ENCODE measurements at regions of chr12 and their contacts with region 1.

Region 1: DNA sequence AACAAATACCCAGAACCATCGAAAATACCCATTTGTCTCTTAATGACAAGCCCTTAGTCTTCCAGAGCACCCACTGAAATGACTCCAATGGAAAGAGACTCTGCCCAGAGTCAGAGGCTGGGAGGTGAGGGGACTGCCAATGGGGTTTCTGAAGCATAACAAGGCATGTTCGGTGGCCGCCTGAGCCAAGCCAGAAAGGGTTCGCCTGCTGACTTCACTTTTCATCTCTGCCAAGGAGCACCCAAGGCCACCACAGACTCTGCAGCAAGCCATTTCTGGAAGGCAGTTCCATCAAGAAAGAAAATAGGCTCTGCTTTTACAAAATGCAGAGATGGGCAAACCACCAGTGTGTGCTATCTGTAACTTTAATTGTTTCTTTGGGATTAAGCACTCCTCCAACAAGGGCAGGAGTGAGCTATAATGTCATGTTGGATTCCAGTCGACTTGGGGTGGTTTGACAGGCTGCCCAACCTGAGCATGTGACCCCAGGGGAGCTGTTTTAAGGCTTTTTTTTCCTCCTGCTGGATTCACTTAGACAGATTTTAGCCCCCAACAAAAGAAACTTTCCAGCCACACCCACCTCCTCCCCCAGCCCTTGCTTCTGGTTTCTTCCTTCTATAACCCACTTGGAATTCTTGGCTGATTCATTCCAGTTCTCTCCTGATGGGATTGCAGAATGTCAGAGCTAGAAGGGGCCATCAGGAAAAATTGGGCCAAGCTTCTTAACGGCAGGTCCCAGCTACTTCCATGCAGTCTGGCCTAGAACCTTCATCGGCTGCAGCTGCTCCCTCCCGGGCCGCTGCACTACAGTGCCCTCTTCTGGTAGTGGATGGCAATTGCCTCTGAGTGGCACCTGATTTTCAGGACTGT is 24.1 kb downstream of the CKAP4 start:
- DNase-seq: peak; percentile 68 to 84 (median 77)
- H3K4me3 ChIP-seq: no peak overlapping the region
- H3K27ac ChIP-seq: peak overlapping the region in 1 of 2 donors; percentile 37
- H3K4me1 ChIP-seq: no peaks in the 10 kb centered on the region
- H3K27me3 ChIP-seq: no peaks in the 10 kb centered on the region
- CTCF ChIP-seq: peak; percentile 75 to 91 (median 84)
- EP300 ChIP-seq: no peak
- POLR2A ChIP-seq: no peak

Region 2: GRCh38 chr12:105409801-105410471 is 813.8 kb before region 1 on chr12:
- intact Hi-C with region 1: loop called in 1 of 4 experiments (anchors 10 kb)
- DNase-seq: peak in 1 of 5 donors; percentile 24
- H3K4me3 ChIP-seq: no peak overlapping the region
- H3K27ac ChIP-seq: no peak overlapping the region
- H3K4me1 ChIP-seq: no peaks in the 10 kb centered on the region
- H3K27me3 ChIP-seq: no peaks in the 10 kb centered on the region
- CTCF ChIP-seq: no peak
- EP300 ChIP-seq: no peak
- POLR2A ChIP-seq: no peak

Region 3: GRCh38 chr12:105492591-105492990 is 731.1 kb before region 1 on chr12:
- intact Hi-C with region 1: no loop called
- DNase-seq: no peak
- H3K4me3 ChIP-seq: no peak overlapping the region
- H3K27ac ChIP-seq: no peak overlapping the region
- H3K4me1 ChIP-seq: no peaks in the 10 kb centered on the region
- H3K27me3 ChIP-seq: no peaks in the 10 kb centered on the region
- CTCF ChIP-seq: no peak
- EP300 ChIP-seq: no peak
- POLR2A ChIP-seq: no peak

Region 4: GRCh38 chr12:106170285-106170684 is 53.4 kb before region 1 on chr12:
- intact Hi-C with region 1: loop called in 2 of 4 experiments (anchors 5 to 10 kb)
- DNase-seq: no peak
- H3K4me3 ChIP-seq: no peak overlapping the region
- H3K27ac ChIP-seq: no peak overlapping the region
- H3K4me1 ChIP-seq: no peaks in the 10 kb centered on the region
- H3K27me3 ChIP-seq: no peaks in the 10 kb centered on the region
- CTCF ChIP-seq: no peak
- EP300 ChIP-seq: no peak
- POLR2A ChIP-seq: no peak

Region 5: GRCh38 chr12:106179086-106179485 is 44.6 kb before region 1 on chr12:
- intact Hi-C with region 1: loop called in 2 of 4 experiments (anchors 5 to 10 kb)
- DNase-seq: peak in 4 of 5 donors; percentile 42 to 73 (median 52)
- H3K4me3 ChIP-seq: no peak overlapping the region
- H3K27ac ChIP-seq: peak overlapping the region; percentile 47 to 67
- H3K4me1 ChIP-seq: peaks cover 15% of the 10 kb centered on the region
- H3K27me3 ChIP-seq: no peaks in the 10 kb centered on the region
- CTCF ChIP-seq: no peak
- EP300 ChIP-seq: no peak
- POLR2A ChIP-seq: no peak

Region 6: DNA sequence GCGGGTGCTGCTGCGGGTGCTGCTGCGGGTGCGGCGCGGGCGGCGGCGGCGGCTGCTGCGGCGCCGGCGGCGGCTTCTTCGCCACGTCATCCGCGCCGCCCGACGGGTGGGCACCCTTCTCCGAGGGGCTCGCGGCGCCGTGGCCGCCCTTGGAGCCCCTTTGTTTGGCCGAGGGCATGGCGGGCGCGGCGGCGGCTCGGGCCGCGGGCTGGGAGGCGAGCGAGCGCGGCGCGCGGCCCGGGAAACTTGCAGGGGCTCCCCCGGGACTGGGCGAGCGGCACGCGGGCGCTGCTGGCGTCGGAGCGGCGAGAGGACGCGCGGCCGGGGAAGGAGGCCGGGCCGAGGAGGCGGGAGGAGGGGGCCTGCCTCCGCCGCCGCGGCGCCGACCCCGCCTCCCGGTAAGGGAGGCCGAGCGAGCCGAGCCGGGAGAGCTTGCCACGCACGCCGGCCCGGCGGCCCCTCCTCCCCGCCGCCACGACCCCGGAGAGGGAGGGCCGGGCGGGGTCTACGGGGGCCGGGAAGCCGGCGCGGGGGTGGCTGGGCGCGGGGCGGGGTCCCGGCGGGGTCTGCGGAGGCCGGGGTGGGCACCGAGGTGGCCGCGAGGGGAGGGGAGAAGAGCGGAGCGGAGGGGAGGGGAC is 24.1 kb after region 1 on chr12 and contains the start of gene CKAP4:
- intact Hi-C with region 1: loop called in 1 of 4 experiments (anchors 1 kb)
- DNase-seq: peak; percentile 80 to 88 (median 85)
- H3K4me3 ChIP-seq: peak within 1 kb of the TSS; percentile 73
- H3K27ac ChIP-seq: peak within 1 kb of the TSS; percentile 99 to 100
- H3K4me1 ChIP-seq: peaks cover 16% of the 10 kb centered on the region
- H3K27me3 ChIP-seq: no peaks in the 10 kb centered on the region
- CTCF ChIP-seq: no peak
- EP300 ChIP-seq: no peak
- POLR2A ChIP-seq: peak; percentile 59
- total RNA-seq, gene CKAP4: 32.0 to 59.4 (median 55.4) TPM

Region 7: DNA sequence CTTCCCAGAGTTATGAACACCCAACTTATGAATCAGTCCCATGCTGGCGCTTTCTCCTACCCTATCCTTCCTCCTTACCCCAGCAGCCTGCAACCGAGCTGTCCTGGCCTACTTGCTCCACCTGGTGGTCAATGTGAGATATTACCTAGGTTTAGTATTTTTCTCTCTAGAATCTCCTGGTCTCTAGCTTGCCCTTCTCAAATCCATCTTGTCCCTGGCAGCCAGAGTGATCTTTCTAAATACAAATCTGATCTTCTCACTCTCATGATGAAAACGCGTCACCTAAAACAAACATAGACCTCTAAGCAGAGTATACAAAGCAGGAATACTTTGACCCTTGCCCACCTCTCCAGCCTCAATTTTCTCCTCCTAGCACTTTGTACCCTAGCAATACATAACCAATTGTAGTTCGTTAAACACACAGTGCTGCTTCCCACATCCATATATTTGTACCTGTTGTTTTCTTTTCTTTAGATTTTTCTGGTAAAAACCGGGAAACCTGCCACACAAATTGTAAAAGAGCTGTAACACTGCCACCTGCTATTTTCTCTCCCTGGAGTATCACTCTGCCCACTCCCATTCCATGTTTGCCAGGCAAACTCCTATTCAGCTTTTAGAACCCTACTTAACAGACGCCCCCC is 58.9 kb after region 1 on chr12:
- intact Hi-C with region 1: loop called in 3 of 4 experiments (anchors 2 to 5 kb)
- DNase-seq: peak in 4 of 5 donors; percentile 28 to 60 (median 42)
- H3K4me3 ChIP-seq: no peak overlapping the region
- H3K27ac ChIP-seq: no peak overlapping the region
- H3K4me1 ChIP-seq: no peaks in the 10 kb centered on the region
- H3K27me3 ChIP-seq: no peaks in the 10 kb centered on the region
- CTCF ChIP-seq: peak; percentile 64 to 73 (median 66)
- EP300 ChIP-seq: no peak
- POLR2A ChIP-seq: no peak

Region 8: GRCh38 chr12:106357549-106358395 is 134.1 kb after region 1 on chr12 and contains the start of gene POLR3B:
- intact Hi-C with region 1: loop called in 1 of 4 experiments (anchors 10 kb)
- DNase-seq: peak; percentile 96 to 97 (median 96)
- H3K4me3 ChIP-seq: peak within 1 kb of the TSS; percentile 69
- H3K27ac ChIP-seq: peak within 1 kb of the TSS; percentile 34 to 90
- H3K4me1 ChIP-seq: peaks cover 4% of the 10 kb centered on the region
- H3K27me3 ChIP-seq: no peaks in the 10 kb centered on the region
- CTCF ChIP-seq: peak; percentile 84 to 86 (median 85)
- EP300 ChIP-seq: no peak
- POLR2A ChIP-seq: peak; percentile 37
- total RNA-seq, gene POLR3B: 5.2 to 15.7 (median 9.7) TPM